ENCODE measurements at regions of chr2 and their contacts with region 1.

Region 1: GRCh38 chr2:128442053-128442751 is 123.5 kb upstream of the HS6ST1 start:
- DNase-seq: peak; percentile 59

Region 2: DNA sequence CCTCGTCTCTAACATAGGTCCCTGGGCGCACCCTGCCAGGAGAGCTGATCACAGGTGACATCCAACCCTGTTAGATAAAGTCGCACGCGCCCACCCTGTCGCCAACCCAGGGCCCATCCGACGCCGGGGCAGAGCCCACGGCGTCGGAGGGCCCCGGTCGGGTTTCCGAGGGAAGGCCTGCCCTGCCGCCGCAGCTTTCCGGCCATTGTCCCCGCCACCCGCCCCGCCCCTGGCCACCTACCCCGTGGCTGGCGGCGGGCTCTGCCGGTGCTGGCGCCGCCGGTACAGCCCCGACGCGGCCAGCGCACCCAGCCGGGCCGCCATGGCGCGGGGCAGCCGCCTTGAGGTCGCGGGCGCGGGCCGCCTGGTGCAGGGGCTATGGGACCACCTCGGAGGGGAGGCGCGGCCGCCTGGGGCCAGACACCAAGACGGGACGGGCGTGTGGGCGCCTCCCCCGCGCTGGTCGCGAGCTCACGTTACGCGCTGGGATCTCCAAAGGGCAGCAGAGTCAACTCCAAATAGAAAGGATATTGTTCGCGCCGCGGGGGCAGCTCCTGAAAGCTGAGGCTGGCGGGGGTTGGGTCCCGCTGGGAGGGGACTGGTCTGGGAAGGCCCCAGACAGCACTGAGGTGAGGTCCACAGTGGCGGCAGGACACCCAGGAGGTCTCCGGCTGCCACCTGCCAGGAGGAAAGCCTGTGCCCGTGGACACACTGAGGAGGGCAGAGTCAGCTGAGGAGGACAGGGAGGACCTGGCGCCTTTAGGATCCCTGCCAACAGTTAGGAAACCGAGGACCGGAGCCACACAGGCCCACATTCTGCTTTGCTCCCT is 777.9 kb before region 1 on chr2:
- intact Hi-C with region 1: no loop called
- DNase-seq: peak; percentile 85

Region 3: DNA sequence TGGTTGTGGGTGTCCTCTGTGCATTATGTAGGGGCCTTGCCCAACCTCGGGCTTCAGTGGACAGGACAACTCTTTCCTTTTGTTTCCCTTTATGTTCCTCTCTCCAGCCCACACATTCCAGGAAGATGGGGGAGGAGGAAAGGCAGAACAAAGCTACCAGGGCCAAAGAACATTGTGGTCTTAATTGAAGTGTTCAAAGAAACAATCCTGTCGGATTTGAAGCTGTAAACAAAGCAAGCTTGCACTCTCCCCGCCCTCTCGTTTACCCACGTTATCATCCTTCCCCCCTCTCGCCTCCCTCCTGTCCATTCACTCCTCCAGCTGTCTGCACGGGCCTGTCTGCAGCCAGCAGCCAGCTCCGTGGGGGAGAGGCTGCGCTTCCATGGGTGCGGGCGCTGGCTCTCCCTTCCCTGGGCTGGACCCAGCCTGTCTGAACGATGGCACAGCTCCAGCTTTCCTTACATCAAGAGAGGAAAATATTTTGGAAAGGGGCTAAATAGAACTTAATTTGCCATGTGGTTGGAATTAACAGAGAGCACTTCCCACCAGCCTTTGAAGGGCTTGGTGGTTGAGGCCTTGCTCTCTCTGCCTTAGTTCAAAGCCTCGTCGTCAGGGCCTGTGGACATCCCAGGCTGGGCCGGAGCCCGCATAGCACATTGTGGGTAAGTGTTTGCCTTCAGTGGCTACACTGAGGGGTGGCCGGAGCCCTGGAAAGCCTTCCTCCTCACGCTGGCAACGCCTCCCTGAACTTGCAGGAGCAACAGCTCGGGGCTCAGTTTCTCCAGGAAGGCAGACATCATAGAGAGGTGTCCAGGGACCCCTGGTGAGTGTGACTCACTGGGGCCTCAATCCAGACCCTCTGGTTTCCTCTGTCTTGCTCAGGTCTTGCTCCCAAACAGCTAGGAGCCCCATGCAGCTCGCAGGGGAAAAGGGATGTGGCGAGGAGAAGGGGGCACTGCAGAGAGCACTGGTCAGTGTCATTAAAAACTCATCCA is 62.9 kb before region 1 on chr2:
- intact Hi-C with region 1: loop called (anchors 5 kb)
- DNase-seq: peak; percentile 75

Region 4: DNA sequence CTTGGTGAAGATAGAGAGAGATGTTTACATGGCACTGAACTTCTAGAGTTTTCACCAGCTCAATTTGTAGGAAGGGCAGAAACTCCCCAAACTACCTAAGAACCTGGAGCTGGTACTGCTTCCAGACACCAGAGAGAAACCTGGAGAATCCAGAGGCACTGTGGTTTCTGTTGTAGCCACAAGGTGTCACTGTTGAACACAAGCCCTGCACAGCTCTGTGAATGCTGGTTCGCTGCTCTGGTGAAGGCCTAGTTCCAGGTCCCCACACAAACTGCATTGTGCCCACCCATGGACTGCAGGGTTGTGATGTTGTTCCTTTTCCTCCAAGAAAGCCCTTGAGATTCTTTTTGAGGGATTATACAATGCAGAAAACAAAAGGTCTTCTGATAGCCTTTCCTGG is 27.0 kb after region 1 on chr2:
- intact Hi-C with region 1: loop called (anchors 2 kb)
- DNase-seq: peak; percentile 47

Region 5: GRCh38 chr2:128513961-128514283 is 71.7 kb after region 1 on chr2:
- intact Hi-C with region 1: no loop called
- DNase-seq: no peak